ENCODE measurements at regions of chr4 and their contacts with region 1.

Region 1: DNA sequence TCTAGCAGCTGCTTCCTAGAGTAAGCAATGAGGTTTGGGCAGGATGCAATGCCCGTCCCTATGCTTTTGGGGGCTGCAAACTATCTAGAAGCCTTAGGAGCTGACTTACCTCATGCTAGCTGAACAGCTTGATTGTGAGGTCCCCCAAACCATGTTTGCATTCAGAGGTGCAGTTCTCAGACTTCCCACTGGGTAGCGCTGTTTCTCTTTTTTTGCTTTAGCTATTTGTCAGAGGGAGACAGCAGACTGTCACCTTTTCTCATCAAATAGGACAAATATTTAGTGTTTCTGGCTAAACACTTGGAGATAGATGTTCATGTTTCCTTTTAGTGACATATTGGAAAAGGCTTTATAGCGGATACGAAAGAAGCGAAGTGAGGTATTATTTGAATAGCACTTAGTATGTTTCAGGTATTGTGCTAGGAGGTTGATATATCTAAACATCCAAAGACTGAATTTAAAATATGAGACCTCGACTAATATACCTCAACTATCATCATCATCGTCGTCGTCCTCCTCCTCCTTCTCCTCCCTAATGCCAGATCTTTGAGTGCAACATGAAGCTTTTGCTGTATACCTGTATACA is 18.7 kb upstream of the TMEM192 start:
- DNase-seq: peak; percentile 71
- H3K4me3 ChIP-seq: no peak overlapping the region
- H3K27ac ChIP-seq: no peak overlapping the region
- H3K4me1 ChIP-seq: peaks cover 13% of the 10 kb centered on the region
- CTCF ChIP-seq: peak; percentile 99

Region 2: GRCh38 chr4:165343353-165344191 is 212.2 kb after region 1 on chr4:
- CTCF ChIA-PET with region 1: interaction called, 5 read pairs
- POLR2A ChIA-PET with region 1: interaction called, 3 read pairs
- intact Hi-C with region 1: loop called (anchors 1 kb)
- DNase-seq: peak; percentile 42
- H3K4me3 ChIP-seq: no peak overlapping the region
- H3K27ac ChIP-seq: no peak overlapping the region
- H3K4me1 ChIP-seq: no peaks in the 10 kb centered on the region
- CTCF ChIP-seq: peak; percentile 78